ENCODE measurements at regions of chr1 and their contacts with region 1.

Region 1: DNA sequence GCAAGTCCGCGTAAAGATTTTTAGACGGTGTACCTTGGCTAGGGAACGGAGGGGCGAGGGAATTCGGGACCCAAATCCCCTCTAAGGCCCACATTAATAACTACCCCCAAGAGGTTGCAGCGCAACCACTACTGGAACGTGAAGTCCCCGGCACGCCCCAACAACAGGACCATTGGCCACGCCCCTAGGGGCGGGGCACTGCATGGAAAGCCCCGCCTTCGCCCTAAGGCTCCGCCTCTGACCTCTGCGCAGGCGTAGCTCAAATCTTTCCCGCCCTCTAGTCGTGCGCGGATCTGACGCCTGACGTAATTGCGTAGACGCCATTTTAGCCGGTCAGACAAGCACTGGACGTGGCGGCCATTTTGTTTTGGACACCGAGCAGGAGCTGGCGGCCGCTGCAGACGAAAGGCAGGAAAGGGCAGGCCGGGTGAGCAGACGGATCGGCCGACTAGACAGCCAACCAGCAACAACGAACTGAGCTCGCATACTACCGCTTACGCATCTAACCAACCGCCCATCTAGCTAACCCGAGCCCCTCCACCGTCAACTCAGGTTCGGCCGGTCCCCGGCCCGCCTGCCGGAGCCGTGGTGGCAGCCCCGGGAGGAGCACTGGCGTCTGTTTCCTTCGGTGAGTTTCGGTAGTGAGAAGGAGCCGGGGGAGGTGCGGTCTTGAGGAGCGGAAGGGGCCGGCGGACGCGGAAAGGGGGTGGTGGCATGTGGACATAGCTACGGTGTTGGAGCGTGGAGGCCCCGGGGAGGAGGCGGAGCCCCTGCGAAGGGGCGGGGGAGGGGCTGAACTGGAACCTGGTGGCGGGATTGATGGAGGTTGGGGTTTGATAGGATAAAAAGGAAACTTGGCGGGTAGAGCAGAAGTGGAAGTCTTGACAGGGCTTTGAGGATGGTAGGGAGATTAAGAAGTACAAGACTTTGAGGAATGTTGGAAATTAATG is at the start of gene CHTOP:
- DNase-seq: peak; percentile 99
- H3K4me3 ChIP-seq: peak within 1 kb of the TSS; percentile 72 to 92 (median 84)
- H3K27ac ChIP-seq: peak within 1 kb of the TSS; percentile 97 to 100 (median 98)
- H3K4me1 ChIP-seq: peaks cover 0 to 40% (median 32%) of the 10 kb centered on the region in 4 donors
- H3K27me3 ChIP-seq: no peaks in the 10 kb centered on the region
- CTCF ChIP-seq: no peak
- EP300 ChIP-seq: peak in 2 of 4 donors; percentile 11 to 28
- POLR2A ChIP-seq: peak; percentile 47 to 81
- total RNA-seq, gene CHTOP: 44.8 to 57.8 (median 50.2) TPM

Region 2: DNA sequence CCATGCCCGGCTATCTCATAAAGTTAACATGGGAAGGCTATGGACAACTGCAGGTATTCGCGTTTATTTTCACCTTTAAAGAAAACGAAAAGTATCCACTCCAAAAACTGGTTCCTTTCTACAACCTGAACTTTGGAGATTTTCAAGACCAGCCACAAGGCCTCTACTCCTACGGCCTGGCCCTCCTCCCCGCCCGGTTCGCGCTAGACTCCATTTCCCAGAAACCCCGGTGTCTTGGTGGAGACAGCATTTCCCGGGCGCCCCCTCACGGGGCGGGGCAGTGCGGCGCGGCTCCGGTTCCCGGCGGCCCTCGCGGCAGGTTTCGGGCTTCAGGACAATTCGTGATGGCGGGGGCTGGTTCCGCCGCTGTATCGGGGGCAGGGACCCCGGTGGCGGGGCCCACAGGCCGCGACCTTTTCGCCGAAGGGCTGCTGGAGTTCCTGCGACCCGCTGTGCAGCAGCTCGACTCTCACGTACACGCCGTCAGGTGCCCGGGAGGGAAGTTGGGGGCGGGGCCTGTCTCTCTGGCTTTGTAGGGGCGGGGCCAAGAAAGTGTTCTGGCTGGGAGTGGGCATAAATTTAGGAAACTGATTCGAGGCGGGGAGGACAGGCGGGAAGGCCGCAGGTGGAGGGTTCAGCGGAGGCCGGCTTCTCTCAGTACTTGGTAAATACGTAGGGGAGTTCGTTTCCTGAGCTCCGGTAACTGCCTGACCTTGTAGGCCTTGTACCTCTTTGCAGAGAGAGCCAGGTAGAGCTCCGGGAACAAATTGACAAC is 24.6 kb after region 1 on chr1 and contains the start of gene SNAPIN:
- intact Hi-C with region 1: loop called (anchors 2 kb)
- DNase-seq: peak; percentile 96
- H3K4me3 ChIP-seq: peak within 1 kb of the TSS; percentile 58 to 73 (median 67)
- H3K27ac ChIP-seq: peak within 1 kb of the TSS; percentile 92 to 94 (median 93)
- H3K4me1 ChIP-seq: peaks cover 0 to 14% (median 11%) of the 10 kb centered on the region in 4 donors
- H3K27me3 ChIP-seq: no peaks in the 10 kb centered on the region
- CTCF ChIP-seq: peak in 1 of 4 experiments; percentile 16
- EP300 ChIP-seq: peak in 1 of 4 donors; percentile 39
- POLR2A ChIP-seq: peak; percentile 51 to 53
- total RNA-seq, gene SNAPIN: 51.2 to 94.5 (median 85.7) TPM

Region 3: GRCh38 chr1:153670859-153671627 is 37.1 kb after region 1 on chr1 and contains the start of gene ILF2:
- intact Hi-C with region 1: loop called (anchors 2 kb)
- DNase-seq: peak; percentile 99
- H3K4me3 ChIP-seq: peak within 1 kb of the TSS; percentile 66 to 81 (median 77)
- H3K27ac ChIP-seq: peak within 1 kb of the TSS; percentile 86 to 90 (median 89)
- H3K4me1 ChIP-seq: peaks cover 0 to 20% (median 15%) of the 10 kb centered on the region in 4 donors
- H3K27me3 ChIP-seq: no peaks in the 10 kb centered on the region
- CTCF ChIP-seq: no peak
- EP300 ChIP-seq: no peak
- POLR2A ChIP-seq: peak; percentile 92 to 96
- total RNA-seq, gene ILF2: 59.8 to 94.0 (median 79.7) TPM